Motor neuron (in vitro differentiated cells): ENCODE measurements at regions of chr3 and their contacts with region 1.

Region 1: DNA sequence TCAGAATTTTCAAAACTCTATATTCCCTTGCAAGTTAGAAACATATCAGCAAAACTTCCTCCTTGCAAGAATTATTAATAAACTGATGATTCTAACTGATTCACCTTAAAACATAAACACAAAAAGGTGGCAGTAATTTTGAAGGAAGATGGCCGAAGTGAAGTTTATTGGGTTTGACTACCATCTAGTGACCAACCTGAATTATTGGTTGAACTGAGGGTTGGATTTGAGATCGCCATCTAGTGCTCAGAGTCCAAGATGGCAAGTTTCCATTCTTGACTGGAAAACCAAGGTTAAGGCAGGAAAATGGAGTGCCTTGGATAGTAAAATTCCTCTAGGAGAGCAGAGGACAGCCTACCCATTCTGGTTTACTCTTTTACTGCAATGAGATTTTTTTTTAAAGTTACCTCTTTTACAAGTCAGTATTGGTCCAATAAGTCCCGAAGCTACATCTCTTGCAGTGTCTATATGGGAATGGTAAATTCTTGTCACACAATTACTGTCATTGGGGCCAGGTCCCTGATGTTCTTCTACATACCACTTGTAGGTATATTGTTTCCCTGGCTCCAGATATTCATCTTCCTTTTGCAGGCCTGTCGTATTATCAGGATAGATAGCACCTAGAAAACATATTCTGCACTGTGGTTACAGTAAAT is 51.6 kb upstream of the CP start:
- ATAC-seq: peak; percentile 21 to 81 (median 68)
- H3K4me3 ChIP-seq: no peak overlapping the region
- H3K27ac ChIP-seq: no peak overlapping the region
- H3K4me1 ChIP-seq: no peaks in the 10 kb centered on the region

Region 2: GRCh38 chr3:148955544-148956346 is 317.5 kb before region 1 on chr3:
- in situ Hi-C with region 1: loop called in 6 of 9 experiments (anchors 10 to 25 kb)
- ATAC-seq: peak; percentile 41 to 85 (median 63)
- H3K4me3 ChIP-seq: no peak overlapping the region
- H3K27ac ChIP-seq: no peak overlapping the region
- H3K4me1 ChIP-seq: peaks cover 0 to 2% of the 10 kb centered on the region in 2 donors

Region 3: GRCh38 chr3:149086232-149086988 is 186.8 kb before region 1 on chr3 and contains the start of gene HLTF:
- in situ Hi-C with region 1: no loop called
- ATAC-seq: peak; percentile 99 to 100 (median 99)
- H3K4me3 ChIP-seq: peak within 1 kb of the TSS; percentile 63 to 86 (median 76)
- H3K27ac ChIP-seq: peak within 1 kb of the TSS; percentile 81 to 89
- H3K4me1 ChIP-seq: peaks cover 9 to 12% of the 10 kb centered on the region in 2 donors
- total RNA-seq, gene HLTF: 7.5 to 92.1 (median 71.6) TPM

Region 4: DNA sequence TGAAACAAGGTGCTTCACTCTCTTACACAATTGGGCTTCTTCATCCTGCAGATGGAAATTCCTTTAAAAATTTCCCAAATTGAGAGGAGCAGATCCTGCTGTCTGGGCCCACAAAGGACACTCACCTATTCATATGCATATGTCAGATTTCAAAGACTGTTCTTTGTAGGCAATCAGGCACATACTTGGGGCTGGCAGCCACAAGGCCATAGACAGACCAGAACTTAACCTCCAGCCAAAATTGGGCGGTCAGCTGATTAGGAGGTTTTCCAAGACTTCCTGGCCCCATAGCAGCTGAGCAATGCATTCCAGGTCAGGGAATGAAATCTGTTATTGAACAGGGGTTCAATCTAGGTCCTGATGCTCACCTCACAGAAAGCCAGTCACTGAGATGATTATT is 158.8 kb before region 1 on chr3:
- in situ Hi-C with region 1: loop called in 1 of 9 experiments (anchors 10 kb)
- ATAC-seq: no peak
- H3K4me3 ChIP-seq: no peak overlapping the region
- H3K27ac ChIP-seq: no peak overlapping the region
- H3K4me1 ChIP-seq: no peaks in the 10 kb centered on the region

Region 5: DNA sequence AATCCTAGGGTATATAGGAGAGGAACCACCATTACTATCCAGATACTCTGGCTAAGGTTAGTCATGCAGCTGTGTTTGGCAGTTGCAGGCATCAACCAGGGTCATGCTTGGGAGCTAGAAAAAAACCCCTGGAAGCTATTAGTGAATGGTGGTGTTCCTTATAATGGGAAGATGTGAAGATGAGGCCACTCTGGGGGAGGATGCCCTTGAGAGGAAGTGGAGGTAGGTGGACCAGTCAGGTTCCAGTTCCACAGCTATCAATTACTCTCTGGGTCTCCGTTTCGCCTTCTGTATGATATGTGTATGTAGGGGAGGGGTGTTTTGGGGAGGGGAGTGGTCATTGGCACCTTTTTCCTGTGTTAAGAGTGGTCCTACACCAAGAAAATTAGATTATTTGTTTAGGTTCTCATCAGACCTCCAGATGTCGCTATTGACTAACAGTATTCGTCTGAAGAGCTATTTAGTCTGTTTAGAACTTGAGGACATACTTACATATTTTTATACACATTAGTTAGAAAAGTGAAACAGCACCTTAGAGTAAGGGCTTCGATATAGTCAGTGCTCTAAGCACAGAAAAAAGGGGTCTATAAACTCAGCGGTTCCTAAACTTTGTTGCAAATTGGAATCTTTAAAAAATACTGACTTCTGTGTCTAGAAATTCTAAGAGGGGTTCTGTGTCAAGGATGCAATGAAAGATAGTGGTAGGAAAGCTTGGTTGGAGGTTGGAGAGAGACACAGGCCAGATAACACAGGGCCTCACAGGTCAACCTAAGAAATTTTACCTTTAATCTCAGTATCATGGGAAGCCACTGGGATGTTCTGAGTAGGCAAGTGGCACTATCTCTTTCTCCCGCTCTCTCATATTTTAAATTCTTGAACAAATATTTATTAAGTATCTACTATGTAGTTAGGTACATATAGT is 152.9 kb before region 1 on chr3:
- in situ Hi-C with region 1: loop called in 6 of 9 experiments (anchors 5 to 25 kb)
- ATAC-seq: peak in 7 of 8 experiments; percentile 44 to 76 (median 70)
- H3K4me3 ChIP-seq: no peak overlapping the region
- H3K27ac ChIP-seq: no peak overlapping the region
- H3K4me1 ChIP-seq: no peaks in the 10 kb centered on the region

Region 6: GRCh38 chr3:149129326-149130205 is 143.7 kb before region 1 on chr3 and contains the start of gene HPS3:
- in situ Hi-C with region 1: loop called in 5 of 9 experiments (anchors 5 to 25 kb)
- ATAC-seq: peak; percentile 90 to 96 (median 94)
- H3K4me3 ChIP-seq: peak within 1 kb of the TSS; percentile 54 to 86 (median 63)
- H3K27ac ChIP-seq: peak within 1 kb of the TSS; percentile 4 to 5
- H3K4me1 ChIP-seq: peaks cover 11 to 24% of the 10 kb centered on the region in 2 donors
- total RNA-seq, gene HPS3: 9.3 to 17.6 (median 10.8) TPM